Activated T-helper 2 cell treated with anti-CD3 and anti-CD28 coated beads, Interferon-gamma antibody, Interleukin-2, Interleukin-4, amounts not matched to agents 10 μg/mL and 5 μg/mL and 100 μg/mL, durations not matched to agents 14 hours and 24 hours and 36 hours (primary cell): ENCODE measurements at regions of chr14 and their contacts with region 1.

Region 1: GRCh38 chr14:51094901-51095853 is at the start of gene TRIM9:
- DNase-seq: peak; percentile 88
- H3K4me3 Mint-ChIP-seq: peak within 1 kb of the TSS; percentile 82
- H3K27ac Mint-ChIP-seq: no peak within 1 kb of the TSS
- H3K4me1 Mint-ChIP-seq: peaks cover 15% of the 10 kb centered on the region
- H3K27me3 Mint-ChIP-seq: peaks cover 49% of the 10 kb centered on the region
- total RNA-seq, gene TRIM9: 0.46 TPM in 2 replicates

Region 2: GRCh38 chr14:50677527-50678063 is 417.6 kb before region 1 on chr14:
- intact Hi-C with region 1: no loop called
- DNase-seq: no peak
- H3K4me3 Mint-ChIP-seq: no peak overlapping the region
- H3K27ac Mint-ChIP-seq: no peak overlapping the region
- H3K4me1 Mint-ChIP-seq: peaks cover 9% of the 10 kb centered on the region
- H3K27me3 Mint-ChIP-seq: peaks cover 8% of the 10 kb centered on the region

Region 3: GRCh38 chr14:50944647-50945413 is 150.3 kb before region 1 on chr14:
- intact Hi-C with region 1: loop called (anchors 5 kb)
- DNase-seq: no peak
- H3K4me3 Mint-ChIP-seq: peak overlapping the region; percentile 85
- H3K27ac Mint-ChIP-seq: peak overlapping the region; percentile 52
- H3K4me1 Mint-ChIP-seq: peaks cover 9% of the 10 kb centered on the region
- H3K27me3 Mint-ChIP-seq: peaks cover 35% of the 10 kb centered on the region

Region 4: GRCh38 chr14:51023964-51024363 is 71.2 kb before region 1 on chr14:
- intact Hi-C with region 1: no loop called
- DNase-seq: no peak
- H3K4me3 Mint-ChIP-seq: no peak overlapping the region
- H3K27ac Mint-ChIP-seq: no peak overlapping the region
- H3K4me1 Mint-ChIP-seq: no peaks in the 10 kb centered on the region
- H3K27me3 Mint-ChIP-seq: peaks cover 5% of the 10 kb centered on the region

Region 5: GRCh38 chr14:51239813-51240803 is 144.9 kb after region 1 on chr14 and contains the start of gene TMX1:
- intact Hi-C with region 1: loop called (anchors 5 kb)
- DNase-seq: peak; percentile 87
- H3K4me3 Mint-ChIP-seq: no peak within 1 kb of the TSS
- H3K27ac Mint-ChIP-seq: no peak within 1 kb of the TSS
- H3K4me1 Mint-ChIP-seq: peaks cover 25% of the 10 kb centered on the region
- H3K27me3 Mint-ChIP-seq: no peaks in the 10 kb centered on the region
- total RNA-seq, gene TMX1: 55.1 and 55.2 TPM in 2 replicates